GM12878 (cell line): ENCODE measurements at regions of chrX and their contacts with region 1.

Region 1: DNA sequence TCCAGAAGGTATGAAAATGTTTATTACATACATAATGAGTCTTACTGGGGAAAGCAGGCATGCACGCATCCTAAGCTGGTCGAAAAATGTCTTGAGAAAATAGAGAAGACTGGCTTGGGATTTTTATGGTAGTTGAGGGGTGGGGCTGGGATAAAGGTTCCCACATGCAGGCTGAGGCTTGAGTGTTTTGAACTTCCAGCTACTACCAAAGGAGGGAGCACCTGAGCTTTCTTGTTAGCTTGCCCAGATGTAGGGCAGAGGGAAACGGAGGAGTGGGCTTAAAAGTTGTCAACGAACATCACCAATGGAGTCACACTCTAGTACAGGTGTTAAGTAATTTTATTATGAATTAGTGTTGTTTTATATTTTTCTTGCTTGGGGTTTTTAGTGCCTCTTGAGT is 39.6 kb upstream of the SRPX start:
- DNase-seq: no peak
- ATAC-seq: peak; percentile 89
- H3K4me3 ChIP-seq: no peak overlapping the region
- H3K27ac ChIP-seq: no peak overlapping the region
- H3K4me1 ChIP-seq: no peaks in the 10 kb centered on the region
- H3K27me3 ChIP-seq: no peaks in the 10 kb centered on the region
- CTCF ChIP-seq: peak; percentile 50 to 68 (median 51)
- EP300 ChIP-seq: no peak
- POLR2A ChIP-seq: no peak
- RAD21 ChIP-seq: peak; percentile 65

Region 2: DNA sequence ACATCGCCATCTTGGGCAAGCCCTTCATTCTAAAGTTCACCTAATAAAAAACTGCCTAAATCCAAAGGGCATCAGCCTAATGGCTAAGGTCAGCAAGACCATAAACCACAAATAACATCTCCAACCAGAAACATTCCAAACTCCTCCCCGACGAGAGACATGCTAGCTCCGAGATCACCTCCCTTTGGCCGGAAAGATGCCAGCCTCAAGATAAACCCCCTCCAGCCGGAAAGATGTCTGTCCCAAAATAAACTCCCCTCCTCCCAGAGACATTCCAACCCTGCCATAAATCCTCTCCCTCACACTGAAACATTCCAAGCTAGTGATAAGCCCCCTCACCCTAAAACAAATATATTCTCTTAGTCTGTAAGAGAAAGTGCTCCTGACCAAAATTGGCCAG is 399.5 kb before region 1 on chrX:
- CTCF ChIA-PET with region 1: no interaction called
- POLR2A ChIA-PET with region 1: no interaction called
- RAD21 ChIA-PET with region 1: no interaction called
- SMC1A ChIA-PET with region 1: no interaction called
- in situ Hi-C with region 1: no loop called
- intact Hi-C with region 1: no loop called
- DNase-seq: no peak
- ATAC-seq: no peak
- H3K4me3 ChIP-seq: no peak overlapping the region
- H3K27ac ChIP-seq: no peak overlapping the region
- H3K4me1 ChIP-seq: no peaks in the 10 kb centered on the region
- H3K27me3 ChIP-seq: no peaks in the 10 kb centered on the region
- CTCF ChIP-seq: no peak
- EP300 ChIP-seq: no peak
- POLR2A ChIP-seq: no peak
- RAD21 ChIP-seq: no peak

Region 3: GRCh38 chrX:38275615-38276014 is 15.4 kb after region 1 on chrX:
- CTCF ChIA-PET with region 1: interaction called, 9 read pairs
- POLR2A ChIA-PET with region 1: interaction called, 6 read pairs
- RAD21 ChIA-PET with region 1: interaction called, 7 read pairs
- SMC1A ChIA-PET with region 1: interaction called, 10 read pairs
- in situ Hi-C with region 1: no loop called
- intact Hi-C with region 1: no loop called
- DNase-seq: peak; percentile 13
- ATAC-seq: peak; percentile 46
- H3K4me3 ChIP-seq: no peak overlapping the region
- H3K27ac ChIP-seq: no peak overlapping the region
- H3K4me1 ChIP-seq: peaks cover 2% of the 10 kb centered on the region
- H3K27me3 ChIP-seq: no peaks in the 10 kb centered on the region
- CTCF ChIP-seq: no peak
- EP300 ChIP-seq: no peak
- POLR2A ChIP-seq: no peak
- RAD21 ChIP-seq: no peak